ENCODE measurements at regions of chr13 and their contacts with region 1.

Region 1: GRCh38 chr13:94435604-94436226 is 43.8 kb downstream of the DCT start:
- DNase-seq: no peak
- ATAC-seq: peak; percentile 88 to 92 (median 91)
- H3K4me3 ChIP-seq: no peak overlapping the region
- H3K27ac ChIP-seq: no peak overlapping the region
- H3K4me1 ChIP-seq: no peaks in the 10 kb centered on the region
- H3K27me3 ChIP-seq: no peaks in the 10 kb centered on the region
- CTCF ChIP-seq: peak; percentile 62 to 67 (median 64)
- POLR2A ChIP-seq: no peak

Region 2: GRCh38 chr13:94549232-94550061 is 113.7 kb after region 1 on chr13:
- intact Hi-C with region 1: no loop called
- DNase-seq: peak; percentile 90 to 92 (median 91)
- ATAC-seq: peak; percentile 90 to 94 (median 92)
- H3K4me3 ChIP-seq: peak overlapping the region; percentile 56 to 79 (median 67)
- H3K27ac ChIP-seq: peak overlapping the region; percentile 85 to 93 (median 90)
- H3K4me1 ChIP-seq: peaks cover 0 to 3% (median 0%) of the 10 kb centered on the region in 4 donors
- H3K27me3 ChIP-seq: no peaks in the 10 kb centered on the region
- CTCF ChIP-seq: no peak
- POLR2A ChIP-seq: peak; percentile 56

Region 3: DNA sequence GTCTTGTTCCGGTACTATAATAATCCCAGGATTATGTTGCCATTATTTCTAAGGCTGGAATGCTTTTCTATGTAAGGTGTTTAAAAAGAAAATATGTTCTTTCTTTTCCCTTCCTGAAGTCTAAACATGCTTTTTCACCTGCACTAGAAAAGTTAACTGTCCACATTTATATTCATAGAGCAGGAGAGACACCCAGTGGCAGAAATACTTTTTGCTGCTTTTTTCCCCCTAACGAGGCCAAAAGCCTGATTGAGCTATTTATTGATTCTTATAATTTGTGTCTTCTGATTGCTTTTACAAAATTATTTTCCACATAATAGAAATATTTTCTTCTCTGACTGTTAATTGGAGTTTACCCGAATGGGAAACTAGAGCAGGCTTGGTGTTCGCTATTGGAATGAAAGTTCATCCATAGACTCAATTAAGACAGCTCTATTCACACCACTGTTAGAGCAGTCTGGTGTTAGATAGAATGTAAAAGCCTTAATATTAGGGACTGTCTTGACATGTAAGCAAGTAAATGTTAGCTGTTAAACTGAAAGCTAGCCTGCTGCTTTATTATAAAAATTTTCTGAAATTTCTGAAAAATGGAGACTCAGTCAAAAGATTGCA is 181.8 kb after region 1 on chr13:
- intact Hi-C with region 1: loop called (anchors 5 to 10 kb)
- DNase-seq: no peak
- ATAC-seq: peak; percentile 77 to 87 (median 86)
- H3K4me3 ChIP-seq: no peak overlapping the region
- H3K27ac ChIP-seq: no peak overlapping the region
- H3K4me1 ChIP-seq: no peaks in the 10 kb centered on the region
- H3K27me3 ChIP-seq: no peaks in the 10 kb centered on the region
- CTCF ChIP-seq: peak; percentile 66 to 78 (median 72)
- POLR2A ChIP-seq: no peak

Measured in right lobe of liver (tissue), 6 donors.